GM12878 (cell line): ENCODE measurements at regions of chr6 and their contacts with region 1.

Region 1: DNA sequence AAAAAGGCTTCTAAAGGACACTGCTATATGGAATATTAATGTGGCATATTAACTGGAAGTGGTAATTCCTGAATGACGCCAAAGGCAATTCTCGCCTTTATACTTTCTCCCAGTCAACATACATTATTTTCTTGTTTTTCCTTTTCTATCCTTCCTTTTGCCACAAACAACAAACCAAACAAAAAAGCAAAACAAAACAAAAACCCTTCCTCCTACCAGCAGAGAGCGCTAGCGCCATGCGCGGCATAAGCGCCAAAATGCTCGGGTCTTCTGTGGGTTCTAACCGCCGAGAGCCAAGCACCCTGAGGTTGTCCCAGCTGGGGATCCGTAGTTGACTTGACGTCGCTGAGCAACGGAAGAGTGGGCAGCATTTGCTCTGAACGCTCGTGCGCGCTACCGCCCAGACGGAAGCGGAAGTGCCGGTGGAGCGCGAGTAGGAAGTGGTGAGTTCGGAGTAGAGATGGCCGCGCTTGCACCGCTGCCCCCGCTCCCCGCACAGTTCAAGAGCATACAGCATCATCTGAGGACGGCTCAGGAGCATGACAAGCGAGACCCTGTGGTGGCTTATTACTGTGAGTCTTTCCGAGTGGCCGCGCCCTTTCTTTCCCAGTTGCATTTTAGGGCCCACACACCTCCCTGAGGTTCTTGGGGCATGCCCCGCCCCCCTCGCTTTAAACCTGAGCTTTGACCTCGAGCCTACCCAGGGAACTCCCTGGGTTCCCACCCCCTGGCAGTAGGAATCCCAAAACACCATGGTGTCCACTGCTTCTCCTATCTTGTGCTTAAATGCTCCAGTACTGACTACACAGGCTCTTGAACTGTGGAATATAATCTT is at the starts of genes NMBR and VTA1:
- DNase-seq: peak; percentile 97
- ATAC-seq: peak; percentile 98
- H3K4me3 ChIP-seq: peak within 1 kb of the TSS; percentile 97
- H3K27ac ChIP-seq: peak within 1 kb of the TSS; percentile 59
- H3K4me1 ChIP-seq: no peaks in the 10 kb centered on the region
- H3K27me3 ChIP-seq: no peaks in the 10 kb centered on the region
- CTCF ChIP-seq: peak; percentile 82 to 96 (median 92); a peak in 5 of 6 replicates
- EP300 ChIP-seq: no peak
- POLR2A ChIP-seq: peak; percentile 94
- RAD21 ChIP-seq: peak; percentile 88
- polyA plus RNA-seq, gene NMBR: not detected
- polyA plus RNA-seq, gene VTA1: 84.7 to 126 TPM

Region 2: DNA sequence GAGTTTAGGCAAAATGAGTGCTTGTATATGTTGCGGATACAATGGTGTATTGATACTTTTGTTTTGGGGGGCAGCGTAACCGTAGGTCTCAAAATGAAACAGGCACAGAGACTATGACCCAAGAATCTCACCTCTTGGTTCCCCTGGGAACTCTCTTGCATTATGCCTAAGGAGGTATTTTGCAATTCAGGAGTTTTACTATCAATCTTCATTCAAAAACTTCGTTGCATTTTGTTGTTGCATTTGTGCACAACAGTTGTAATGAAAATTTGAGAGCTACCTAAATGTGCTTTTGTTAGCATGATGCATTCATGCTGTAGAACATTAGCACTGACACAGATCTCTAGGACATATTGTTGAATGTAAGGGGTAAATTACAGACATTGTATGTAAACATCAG is 18.2 kb after region 1 on chr6:
- CTCF ChIA-PET with region 1: interaction called, 10 read pairs
- POLR2A ChIA-PET with region 1: no interaction called
- RAD21 ChIA-PET with region 1: interaction called, 4 read pairs
- SMC1A ChIA-PET with region 1: interaction called, 4 read pairs
- in situ Hi-C with region 1: no loop called
- intact Hi-C with region 1: no loop called
- DNase-seq: no peak
- ATAC-seq: no peak
- H3K4me3 ChIP-seq: no peak overlapping the region
- H3K27ac ChIP-seq: no peak overlapping the region
- H3K4me1 ChIP-seq: no peaks in the 10 kb centered on the region
- H3K27me3 ChIP-seq: no peaks in the 10 kb centered on the region
- CTCF ChIP-seq: no peak
- EP300 ChIP-seq: no peak
- POLR2A ChIP-seq: no peak
- RAD21 ChIP-seq: no peak

Region 3: GRCh38 chr6:142387997-142388815 is 241.2 kb after region 1 on chr6:
- CTCF ChIA-PET with region 1: interaction called, 33 read pairs
- POLR2A ChIA-PET with region 1: no interaction called
- RAD21 ChIA-PET with region 1: interaction called, 7 read pairs
- SMC1A ChIA-PET with region 1: interaction called, 3 read pairs
- in situ Hi-C with region 1: loop called (anchors 5 kb)
- intact Hi-C with region 1: loop called (anchors 1 kb)
- DNase-seq: no peak
- ATAC-seq: peak; percentile 68
- H3K4me3 ChIP-seq: no peak overlapping the region
- H3K27ac ChIP-seq: no peak overlapping the region
- H3K4me1 ChIP-seq: no peaks in the 10 kb centered on the region
- H3K27me3 ChIP-seq: no peaks in the 10 kb centered on the region; a peak in 1 of 4 replicates
- CTCF ChIP-seq: peak; percentile 44 to 46 (median 45); a peak in 5 of 6 replicates
- EP300 ChIP-seq: no peak
- POLR2A ChIP-seq: no peak
- RAD21 ChIP-seq: peak; percentile 58

Region 4: GRCh38 chr6:142474531-142475289 is 327.7 kb after region 1 on chr6:
- CTCF ChIA-PET with region 1: interaction called, 3 read pairs
- POLR2A ChIA-PET with region 1: no interaction called
- RAD21 ChIA-PET with region 1: no interaction called
- SMC1A ChIA-PET with region 1: interaction called, 7 read pairs
- in situ Hi-C with region 1: no loop called
- intact Hi-C with region 1: loop called (anchors 5 kb)
- DNase-seq: no peak
- ATAC-seq: peak; percentile 69
- H3K4me3 ChIP-seq: no peak overlapping the region
- H3K27ac ChIP-seq: no peak overlapping the region
- H3K4me1 ChIP-seq: no peaks in the 10 kb centered on the region
- H3K27me3 ChIP-seq: no peaks in the 10 kb centered on the region; a peak in 1 of 4 replicates
- CTCF ChIP-seq: peak; percentile 53 to 79 (median 64); a peak in 5 of 6 replicates
- EP300 ChIP-seq: no peak
- POLR2A ChIP-seq: no peak
- RAD21 ChIP-seq: peak; percentile 89

Region 5: DNA sequence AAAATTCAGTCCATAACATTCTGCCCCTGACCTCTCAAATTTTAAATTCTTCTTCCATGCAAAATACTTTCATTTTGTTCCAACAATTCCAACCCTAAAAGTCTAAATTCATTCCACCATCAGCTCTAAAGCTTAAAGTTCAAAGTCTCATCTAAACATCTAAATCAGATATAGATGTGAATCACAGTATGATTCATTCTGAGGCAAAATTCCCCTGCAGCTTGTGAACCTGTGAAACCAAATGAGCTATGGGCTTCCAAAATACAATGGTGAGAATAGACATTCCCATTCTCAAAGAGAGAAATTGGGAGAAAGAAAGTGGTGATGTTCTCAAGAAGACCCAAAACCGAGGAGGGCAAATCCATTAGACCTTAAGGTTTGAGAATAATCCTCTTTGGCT is 488.1 kb after region 1 on chr6:
- CTCF ChIA-PET with region 1: no interaction called
- POLR2A ChIA-PET with region 1: no interaction called
- RAD21 ChIA-PET with region 1: no interaction called
- SMC1A ChIA-PET with region 1: no interaction called
- in situ Hi-C with region 1: no loop called
- intact Hi-C with region 1: no loop called
- DNase-seq: no peak
- ATAC-seq: no peak
- H3K4me3 ChIP-seq: no peak overlapping the region
- H3K27ac ChIP-seq: no peak overlapping the region
- H3K4me1 ChIP-seq: no peaks in the 10 kb centered on the region
- H3K27me3 ChIP-seq: peaks cover 0 to 2% of the 10 kb centered on the region in 2 experiments; a peak in 1 of 4 replicates
- CTCF ChIP-seq: no peak
- EP300 ChIP-seq: no peak
- POLR2A ChIP-seq: no peak
- RAD21 ChIP-seq: no peak